GM10248 (cell line): ENCODE measurements at regions of chr14 and their contacts with region 1.

Region 1: GRCh38 chr14:22570132-22570949 is 18.7 kb downstream of the DAD1 start:
- DNase-seq: peak; percentile 81
- CTCF ChIP-seq: peak; percentile 93

Region 2: DNA sequence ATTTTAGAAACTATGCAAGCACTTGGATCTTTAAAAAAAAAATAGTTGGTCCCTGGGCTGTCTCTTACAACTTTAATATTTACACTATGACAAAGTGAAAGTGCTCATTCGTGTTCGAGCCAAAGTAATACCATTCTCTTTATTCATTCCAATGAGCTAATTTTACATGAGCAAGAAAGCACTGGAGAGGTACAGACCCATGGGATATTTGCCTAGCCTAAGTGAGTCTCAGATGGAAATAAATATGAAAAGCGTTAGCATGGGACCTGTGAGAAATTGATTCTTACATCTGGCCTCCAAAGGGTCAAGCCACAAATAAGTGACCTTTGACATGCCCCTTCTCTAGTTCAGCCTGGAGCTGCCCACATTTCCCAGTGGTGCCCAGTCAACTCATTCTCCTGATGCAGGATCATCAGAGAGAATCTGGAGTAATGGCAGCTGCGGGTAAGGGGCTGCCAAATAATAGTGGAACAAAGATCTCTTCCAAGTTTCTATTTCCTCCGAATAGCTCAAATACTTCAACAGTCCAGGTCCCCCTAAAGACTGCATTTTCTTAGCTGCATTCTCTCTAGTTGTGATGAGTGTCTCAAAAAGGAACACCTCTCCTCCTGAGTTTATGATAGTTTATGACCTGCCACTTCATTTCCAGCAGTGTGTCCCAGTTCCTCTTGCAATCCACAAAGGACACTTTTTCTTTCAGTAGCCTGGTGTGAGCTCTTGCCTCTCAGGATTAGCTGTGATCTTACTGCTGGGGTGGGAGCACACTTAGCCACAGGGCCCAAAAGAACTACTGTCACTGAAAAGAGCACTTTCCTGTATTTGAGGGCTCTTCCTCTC is 189.6 kb before region 1 on chr14:
- CTCF ChIA-PET with region 1: interaction called, 46 read pairs
- POLR2A ChIA-PET with region 1: no interaction called
- DNase-seq: no peak
- CTCF ChIP-seq: no peak

Region 3: DNA sequence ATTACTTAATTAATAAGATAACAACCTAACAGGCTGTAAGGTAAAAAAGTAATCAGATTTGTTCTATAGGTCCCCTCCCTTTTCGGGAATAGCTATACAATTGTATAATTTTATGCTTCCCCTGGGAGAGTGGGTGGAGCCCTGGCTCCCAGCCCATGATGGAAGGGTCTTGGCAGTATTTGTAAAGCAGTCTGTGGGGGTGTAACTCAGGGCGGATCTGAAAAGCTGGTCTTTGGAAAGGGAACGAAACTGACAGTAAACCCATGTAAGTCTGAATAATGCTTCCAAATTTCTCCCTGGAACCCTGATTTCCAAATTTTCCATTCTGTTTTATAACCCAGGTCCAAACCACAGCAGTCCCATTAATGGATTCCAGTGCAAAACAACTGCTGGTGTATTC is 91.7 kb before region 1 on chr14:
- CTCF ChIA-PET with region 1: interaction called, 57 read pairs
- POLR2A ChIA-PET with region 1: no interaction called
- DNase-seq: no peak
- CTCF ChIP-seq: no peak

Region 4: DNA sequence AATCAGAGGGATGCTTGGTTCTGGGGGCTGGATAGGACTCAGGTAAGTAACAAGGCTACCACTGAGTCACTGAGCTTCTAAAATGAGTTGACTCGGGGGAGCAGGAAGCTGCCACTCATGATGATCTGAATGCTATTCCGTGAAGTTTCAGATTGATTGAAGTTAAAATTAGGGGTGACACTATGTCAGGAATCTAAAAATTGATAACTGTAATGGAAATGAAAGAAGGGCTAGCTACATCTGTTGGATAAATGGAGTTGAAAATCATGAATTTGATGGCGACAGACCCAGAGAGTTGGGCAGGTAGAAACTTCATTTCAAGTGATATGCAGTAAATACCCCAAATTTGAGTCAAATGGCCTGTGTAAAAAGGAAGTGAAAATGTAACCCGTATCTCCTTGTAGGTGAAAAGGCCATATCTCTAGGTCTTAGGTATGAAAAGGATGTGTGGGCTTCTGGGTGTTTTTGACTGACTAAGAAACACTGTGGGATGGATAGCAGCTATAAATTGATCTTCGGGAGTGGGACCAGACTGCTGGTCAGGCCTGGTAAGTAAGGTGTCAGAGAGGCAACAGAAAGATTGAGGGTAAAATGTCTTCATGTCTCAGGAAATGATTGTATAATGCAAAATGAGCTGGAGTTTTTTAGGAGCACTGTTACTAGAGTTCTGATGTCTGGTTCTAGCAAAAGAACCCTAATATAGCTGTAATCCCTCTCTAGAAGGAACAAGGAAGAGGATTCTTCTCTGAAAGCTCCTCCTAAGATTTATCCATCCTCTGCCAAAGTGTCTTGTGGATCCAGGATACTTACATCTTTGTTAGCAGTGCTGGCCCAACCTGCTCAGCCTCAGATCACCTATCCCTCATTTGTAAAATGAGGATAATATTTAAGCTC is 38.6 kb before region 1 on chr14:
- CTCF ChIA-PET with region 1: interaction called, 21 read pairs
- POLR2A ChIA-PET with region 1: no interaction called
- DNase-seq: peak; percentile 60
- CTCF ChIP-seq: no peak

Region 5: DNA sequence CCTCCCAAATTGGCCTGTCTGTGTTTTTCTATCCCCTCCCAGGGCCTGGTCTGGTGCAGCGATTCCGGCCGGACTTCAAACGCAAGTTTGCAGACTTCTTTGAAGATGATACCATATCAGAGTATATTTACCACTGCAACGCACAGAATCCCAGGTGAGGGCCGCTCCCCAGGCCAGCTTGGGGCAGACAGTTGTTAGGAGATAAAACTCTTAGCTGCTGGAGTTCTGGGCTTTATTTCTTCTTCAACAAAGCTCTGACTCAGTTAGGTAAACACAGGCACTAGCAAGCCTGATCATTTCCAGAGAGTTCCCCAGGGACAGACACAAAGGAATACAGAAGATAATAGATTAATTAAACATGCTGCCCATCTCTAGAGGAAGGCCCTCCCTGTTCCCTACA is 36.0 kb after region 1 on chr14:
- CTCF ChIA-PET with region 1: interaction called, 87 read pairs
- POLR2A ChIA-PET with region 1: no interaction called
- DNase-seq: no peak
- CTCF ChIP-seq: no peak

Region 6: GRCh38 chr14:22852940-22853767 is 282.8 kb after region 1 on chr14:
- CTCF ChIA-PET with region 1: interaction called, 123 read pairs
- POLR2A ChIA-PET with region 1: interaction called, 8 read pairs
- DNase-seq: peak; percentile 87
- CTCF ChIP-seq: peak; percentile 86